PC-9 (cell line): ENCODE measurements at regions of chr5 and their contacts with region 1.

Region 1: DNA sequence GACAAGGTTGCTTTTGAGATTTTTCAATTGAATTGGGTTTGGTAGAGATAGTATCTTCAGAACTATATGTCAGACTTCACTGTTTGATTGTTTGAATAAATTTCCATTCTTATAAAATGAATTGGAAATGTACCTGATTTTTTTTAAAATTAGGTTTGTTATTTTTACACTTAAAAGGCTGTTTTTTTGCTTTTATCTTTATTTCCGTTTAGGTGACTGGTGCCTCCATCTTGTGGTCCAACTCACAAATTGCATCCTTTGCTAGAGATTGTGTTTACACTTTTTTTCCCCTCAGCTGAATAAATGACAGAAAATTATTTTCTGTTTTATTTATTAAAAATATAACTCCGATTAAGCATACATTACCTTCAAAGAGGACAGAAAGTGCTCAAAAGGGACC is 15.6 kb downstream of the NDUFAF2 start:
- DNase-seq: no peak
- H3K4me3 ChIP-seq: no peak overlapping the region
- H3K27ac ChIP-seq: no peak overlapping the region
- H3K4me1 ChIP-seq: no peaks in the 10 kb centered on the region
- H3K27me3 ChIP-seq: no peaks in the 10 kb centered on the region
- CTCF ChIP-seq: peak; percentile 75

Region 2: GRCh38 chr5:60944904-60945812 is 15.4 kb before region 1 on chr5 and contains the starts of genes ERCC8 and NDUFAF2:
- CTCF ChIA-PET with region 1: no interaction called
- POLR2A ChIA-PET with region 1: interaction called, 12 read pairs
- intact Hi-C with region 1: no loop called
- DNase-seq: peak; percentile 84 to 86
- H3K4me3 ChIP-seq: peak within 1 kb of the TSS; percentile 98
- H3K27ac ChIP-seq: peak within 1 kb of the TSS; percentile 70
- H3K4me1 ChIP-seq: peaks cover 26% of the 10 kb centered on the region
- H3K27me3 ChIP-seq: no peaks in the 10 kb centered on the region
- CTCF ChIP-seq: no peak
- total RNA-seq, gene ERCC8: 8.7 and 13.0 TPM in 2 replicates
- total RNA-seq, gene NDUFAF2: 20.7 and 42.7 TPM in 2 replicates

Region 3: DNA sequence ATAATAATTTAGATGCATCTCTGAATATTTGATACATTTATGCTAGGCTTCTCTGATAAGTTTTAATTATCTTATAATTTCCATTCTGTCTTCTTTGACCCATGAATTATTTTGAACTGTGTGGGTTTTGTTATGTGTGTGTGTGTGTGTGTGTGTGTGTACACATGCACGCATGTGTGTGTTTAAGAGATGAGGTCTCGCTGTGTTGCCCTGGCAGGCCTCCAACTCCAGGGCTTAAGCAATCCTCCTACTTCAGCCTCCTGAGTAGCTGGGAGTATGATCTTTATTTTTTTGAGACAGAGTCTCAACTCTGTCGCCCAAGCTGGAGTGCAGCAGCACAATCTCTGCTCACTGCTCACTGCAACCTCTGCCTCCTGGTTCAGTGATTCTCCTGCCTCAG is 59.8 kb after region 1 on chr5:
- CTCF ChIA-PET with region 1: no interaction called
- POLR2A ChIA-PET with region 1: no interaction called
- intact Hi-C with region 1: no loop called
- DNase-seq: no peak
- H3K4me3 ChIP-seq: no peak overlapping the region
- H3K27ac ChIP-seq: no peak overlapping the region
- H3K4me1 ChIP-seq: 0 out of 2 replicates have a peak, but pooled peaks cover 7% of the 10 kb centered on the region
- H3K27me3 ChIP-seq: no peaks in the 10 kb centered on the region
- CTCF ChIP-seq: no peak

Region 4: GRCh38 chr5:61115968-61116367 is 155.4 kb after region 1 on chr5:
- CTCF ChIA-PET with region 1: no interaction called
- POLR2A ChIA-PET with region 1: no interaction called
- intact Hi-C with region 1: no loop called
- DNase-seq: no peak
- H3K4me3 ChIP-seq: no peak overlapping the region
- H3K27ac ChIP-seq: no peak overlapping the region
- H3K4me1 ChIP-seq: no peaks in the 10 kb centered on the region
- H3K27me3 ChIP-seq: no peaks in the 10 kb centered on the region
- CTCF ChIP-seq: no peak

Region 5: DNA sequence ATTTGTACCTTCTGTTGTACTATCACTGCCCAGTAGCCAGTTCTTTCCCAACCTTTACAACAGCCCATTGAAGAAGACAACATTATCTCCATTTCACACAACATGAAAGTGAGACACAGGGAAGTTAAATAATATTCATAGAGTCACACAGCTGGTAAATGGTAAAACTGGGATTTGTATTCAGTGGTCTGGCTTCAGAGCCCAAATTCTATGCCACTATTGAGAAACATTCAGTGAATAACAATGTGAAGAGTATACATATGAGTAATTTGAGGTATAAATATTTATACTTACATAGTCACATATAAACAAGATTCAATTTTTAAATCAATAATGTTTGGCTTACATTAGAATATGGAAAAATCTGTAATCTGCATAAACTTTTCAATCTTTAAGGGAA is 187.9 kb after region 1 on chr5:
- CTCF ChIA-PET with region 1: no interaction called
- POLR2A ChIA-PET with region 1: interaction called, 10 read pairs
- intact Hi-C with region 1: no loop called
- DNase-seq: no peak
- H3K4me3 ChIP-seq: no peak overlapping the region
- H3K27ac ChIP-seq: no peak overlapping the region
- H3K4me1 ChIP-seq: no peaks in the 10 kb centered on the region
- H3K27me3 ChIP-seq: no peaks in the 10 kb centered on the region
- CTCF ChIP-seq: no peak

Region 6: GRCh38 chr5:61933787-61934626 is 973.4 kb after region 1 on chr5:
- CTCF ChIA-PET with region 1: no interaction called
- POLR2A ChIA-PET with region 1: no interaction called
- intact Hi-C with region 1: loop called (anchors 2 kb)
- DNase-seq: peak in 1 of 2 experiments; percentile 41
- H3K4me3 ChIP-seq: no peak overlapping the region
- H3K27ac ChIP-seq: no peak overlapping the region
- H3K4me1 ChIP-seq: no peaks in the 10 kb centered on the region
- H3K27me3 ChIP-seq: 0 out of 2 replicates have a peak, but pooled peaks cover 13% of the 10 kb centered on the region
- CTCF ChIP-seq: peak; percentile 62

Region 7: GRCh38 chr5:62143268-62144229 is 1183.0 kb after region 1 on chr5:
- CTCF ChIA-PET with region 1: no interaction called
- POLR2A ChIA-PET with region 1: no interaction called
- intact Hi-C with region 1: loop called (anchors 10 kb)
- DNase-seq: no peak
- H3K4me3 ChIP-seq: no peak overlapping the region
- H3K27ac ChIP-seq: no peak overlapping the region
- H3K4me1 ChIP-seq: no peaks in the 10 kb centered on the region
- H3K27me3 ChIP-seq: peaks cover 29% of the 10 kb centered on the region
- CTCF ChIP-seq: peak; percentile 65

Region 8: DNA sequence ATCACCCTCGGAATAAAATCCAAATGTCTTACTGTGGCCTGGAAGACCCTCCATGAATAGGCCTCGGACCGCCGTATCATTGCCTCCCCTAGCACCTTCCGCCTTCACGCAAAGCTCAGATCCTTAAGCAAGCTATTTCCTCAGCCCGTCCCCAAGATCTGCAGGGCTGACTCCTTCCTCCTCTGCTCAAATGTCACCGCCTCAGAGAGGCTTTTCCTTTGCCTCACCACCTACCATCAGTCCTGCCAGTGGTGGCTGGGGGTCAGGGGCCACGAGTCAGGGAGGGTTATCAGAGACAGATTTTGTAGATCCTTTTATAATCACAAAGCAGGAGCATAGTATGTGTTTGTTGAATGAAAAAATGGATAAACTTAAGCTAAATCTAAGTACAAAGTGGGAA is 1271.0 kb after region 1 on chr5:
- CTCF ChIA-PET with region 1: no interaction called
- POLR2A ChIA-PET with region 1: no interaction called
- intact Hi-C with region 1: loop called (anchors 10 kb)
- DNase-seq: no peak
- H3K4me3 ChIP-seq: no peak overlapping the region
- H3K27ac ChIP-seq: no peak overlapping the region
- H3K4me1 ChIP-seq: peaks cover 10% of the 10 kb centered on the region
- H3K27me3 ChIP-seq: no peaks in the 10 kb centered on the region
- CTCF ChIP-seq: no peak

Region 9: GRCh38 chr5:62340392-62340791 is 1379.8 kb after region 1 on chr5:
- CTCF ChIA-PET with region 1: interaction called, 15 read pairs
- POLR2A ChIA-PET with region 1: no interaction called
- intact Hi-C with region 1: no loop called
- DNase-seq: no peak
- H3K4me3 ChIP-seq: no peak overlapping the region
- H3K27ac ChIP-seq: no peak overlapping the region
- H3K4me1 ChIP-seq: no peaks in the 10 kb centered on the region
- H3K27me3 ChIP-seq: no peaks in the 10 kb centered on the region
- CTCF ChIP-seq: peak; percentile 45